Activated T-helper 1 cell treated with anti-CD3 and anti-CD28 coated beads, Interleukin-12 subunit alpha, Interleukin-12 subunit beta, Interleukin-2, Interleukin-4 antibody, amounts not matched to agents 30 ng/mL and 10 ng/mL and 1 ng/mL, durations not matched to agents 14 hours and 24 hours and 36 hours (primary cell): ENCODE measurements at regions of chr9 and their contacts with region 1.

Region 1: DNA sequence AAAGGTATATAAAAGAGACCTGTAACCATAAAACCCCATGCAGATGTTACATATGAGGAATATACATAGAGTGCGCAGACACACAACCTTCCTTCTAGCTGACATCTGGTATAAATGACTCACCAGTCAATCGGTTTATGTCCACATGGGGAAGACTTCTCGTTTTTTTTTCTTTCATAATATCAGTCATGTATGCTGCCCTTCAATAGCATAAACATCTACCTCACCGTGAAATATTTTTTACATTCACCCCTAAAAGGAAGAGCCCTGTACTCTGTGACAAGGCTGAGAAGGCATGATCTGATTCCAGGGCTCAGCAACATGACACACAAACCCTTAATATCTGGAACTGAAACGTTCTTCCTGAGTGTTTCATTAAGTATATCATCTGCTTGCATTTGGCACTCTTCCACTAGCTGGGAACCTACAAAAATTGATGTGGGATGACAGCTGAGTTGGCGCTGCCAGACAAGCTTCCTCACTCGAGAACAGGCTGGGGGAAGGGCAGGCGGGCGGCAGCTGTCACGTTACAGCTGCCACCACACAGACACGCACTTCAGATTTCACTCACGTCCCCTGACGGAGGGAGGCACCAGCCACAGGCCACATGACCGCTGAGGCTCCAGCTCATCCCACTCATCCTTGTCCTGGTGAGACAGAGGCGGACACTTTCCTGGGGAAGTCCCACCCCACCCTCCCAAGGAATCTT is 74.2 kb downstream of the SHB start:
- DNase-seq: no peak
- H3K4me3 Mint-ChIP-seq: peak overlapping the region; percentile 16
- H3K27ac Mint-ChIP-seq: peak overlapping the region; percentile 26
- H3K4me1 Mint-ChIP-seq: peaks cover 23% of the 10 kb centered on the region
- H3K27me3 Mint-ChIP-seq: no peaks in the 10 kb centered on the region

Region 2: DNA sequence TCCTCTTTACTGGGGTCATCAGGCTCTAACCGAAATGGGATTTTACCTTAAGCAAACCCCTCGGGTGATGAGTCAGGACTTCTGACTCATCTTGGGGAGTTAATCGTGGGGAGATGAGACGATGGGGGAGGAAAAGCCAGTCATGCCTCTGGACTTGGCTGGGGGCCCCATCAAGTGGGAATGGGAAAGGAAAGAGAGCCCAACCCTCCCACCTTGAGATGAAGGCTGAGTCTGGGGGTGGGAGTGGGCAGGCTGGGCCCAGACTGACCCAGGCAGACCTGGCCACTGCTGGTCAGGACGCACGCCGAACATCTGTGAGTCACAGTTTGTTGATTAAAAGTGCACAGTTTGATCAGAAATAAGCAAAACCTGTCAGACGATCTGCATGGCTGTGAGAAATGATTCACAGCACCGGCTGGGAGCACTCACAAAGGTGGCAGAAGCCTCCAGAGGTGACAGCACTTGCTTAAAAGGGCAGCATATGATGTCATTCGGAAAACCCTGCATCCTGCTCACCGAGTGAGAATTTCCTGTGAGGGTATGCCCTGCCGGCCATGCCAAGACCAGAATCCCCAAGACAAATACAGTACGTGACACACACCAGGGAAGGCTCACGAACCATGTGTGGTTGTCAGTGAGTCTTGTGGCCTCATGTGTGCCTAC is 40.9 kb before region 1 on chr9:
- intact Hi-C with region 1: loop called (anchors 1 kb)
- DNase-seq: peak; percentile 15
- H3K4me3 Mint-ChIP-seq: peak overlapping the region; percentile 27
- H3K27ac Mint-ChIP-seq: peak overlapping the region; percentile 81
- H3K4me1 Mint-ChIP-seq: peaks cover 38% of the 10 kb centered on the region
- H3K27me3 Mint-ChIP-seq: no peaks in the 10 kb centered on the region

Region 3: GRCh38 chr9:38008168-38009034 is 13.6 kb after region 1 on chr9:
- intact Hi-C with region 1: loop called (anchors 2 kb)
- DNase-seq: no peak
- H3K4me3 Mint-ChIP-seq: no peak overlapping the region
- H3K27ac Mint-ChIP-seq: peak overlapping the region; percentile 69
- H3K4me1 Mint-ChIP-seq: peaks cover 17% of the 10 kb centered on the region
- H3K27me3 Mint-ChIP-seq: no peaks in the 10 kb centered on the region

Region 4: GRCh38 chr9:38018984-38019591 is 24.3 kb after region 1 on chr9:
- intact Hi-C with region 1: no loop called
- DNase-seq: no peak
- H3K4me3 Mint-ChIP-seq: no peak overlapping the region
- H3K27ac Mint-ChIP-seq: no peak overlapping the region
- H3K4me1 Mint-ChIP-seq: no peaks in the 10 kb centered on the region
- H3K27me3 Mint-ChIP-seq: no peaks in the 10 kb centered on the region